Posterior vena cava (tissue), 2 donors: ENCODE measurements at regions of chr13 and their contacts with region 1.

Region 1: DNA sequence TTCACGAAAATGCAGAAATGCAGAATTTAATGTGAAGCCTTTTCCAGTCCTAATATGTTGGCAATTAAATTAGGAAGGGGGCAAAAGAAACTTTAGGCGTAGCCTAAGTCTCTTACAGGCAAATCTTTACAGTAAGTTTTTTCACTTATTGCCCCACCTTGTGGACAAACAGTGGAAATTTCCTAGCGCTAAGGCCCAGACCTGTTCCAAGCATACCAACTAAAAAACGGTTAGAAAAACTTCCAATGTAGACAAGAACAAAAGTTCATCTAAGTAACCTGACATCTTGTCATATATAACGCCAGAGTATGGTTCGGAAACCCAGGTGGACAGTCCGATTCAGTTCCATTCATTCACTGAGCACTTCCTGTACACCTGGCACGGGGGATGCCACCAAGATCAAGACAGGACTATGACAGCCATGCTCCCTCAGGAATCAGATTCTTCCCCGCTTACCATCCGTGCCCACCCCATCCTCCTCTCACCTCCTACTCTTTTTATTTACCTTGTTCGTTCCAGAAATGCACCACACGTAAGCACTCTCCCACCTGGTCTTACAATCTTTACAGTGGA is 4.9 kb downstream of the ZAR1L start:
- DNase-seq: no peak

Region 2: GRCh38 chr13:31903111-31903815 is 407.0 kb before region 1 on chr13:
- intact Hi-C with region 1: loop called in 1 of 2 experiments (anchors 5 kb)
- DNase-seq: no peak

Region 3: GRCh38 chr13:31909864-31910551 is 400.2 kb before region 1 on chr13:
- intact Hi-C with region 1: loop called in 1 of 2 experiments (anchors 10 kb)
- DNase-seq: no peak

Region 4: GRCh38 chr13:32019612-32020233 is 290.5 kb before region 1 on chr13:
- intact Hi-C with region 1: loop called (anchors 5 kb)
- DNase-seq: no peak